Left ventricle myocardium inferior (tissue), 1 donor: ENCODE measurements at regions of chr5 and their contacts with region 1.

Region 1: DNA sequence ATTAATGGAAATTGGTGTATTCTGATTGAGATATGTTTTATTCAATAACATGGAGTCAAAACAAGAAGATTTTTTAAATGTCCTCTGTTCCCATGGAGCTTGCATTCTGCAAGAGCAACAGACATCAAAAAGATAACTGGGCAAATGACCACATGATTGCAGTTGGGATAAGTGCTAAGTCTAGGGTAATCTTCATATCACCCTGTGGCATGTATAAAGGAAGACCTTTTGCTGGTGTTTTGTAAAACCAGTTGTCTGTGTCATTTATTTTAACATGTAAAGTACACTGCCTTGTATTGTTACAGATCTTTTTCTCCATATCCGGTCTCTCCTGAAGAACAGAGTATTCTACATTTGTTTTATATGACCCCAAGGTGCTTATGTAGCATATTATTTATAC is 44.0 kb downstream of the PTCD2 start:
- DNase-seq: no peak
- H3K4me3 ChIP-seq: no peak overlapping the region
- H3K27ac ChIP-seq: no peak overlapping the region
- H3K4me1 ChIP-seq: peaks cover 12% of the 10 kb centered on the region
- H3K27me3 ChIP-seq: no peaks in the 10 kb centered on the region
- CTCF ChIP-seq: no peak

Region 2: DNA sequence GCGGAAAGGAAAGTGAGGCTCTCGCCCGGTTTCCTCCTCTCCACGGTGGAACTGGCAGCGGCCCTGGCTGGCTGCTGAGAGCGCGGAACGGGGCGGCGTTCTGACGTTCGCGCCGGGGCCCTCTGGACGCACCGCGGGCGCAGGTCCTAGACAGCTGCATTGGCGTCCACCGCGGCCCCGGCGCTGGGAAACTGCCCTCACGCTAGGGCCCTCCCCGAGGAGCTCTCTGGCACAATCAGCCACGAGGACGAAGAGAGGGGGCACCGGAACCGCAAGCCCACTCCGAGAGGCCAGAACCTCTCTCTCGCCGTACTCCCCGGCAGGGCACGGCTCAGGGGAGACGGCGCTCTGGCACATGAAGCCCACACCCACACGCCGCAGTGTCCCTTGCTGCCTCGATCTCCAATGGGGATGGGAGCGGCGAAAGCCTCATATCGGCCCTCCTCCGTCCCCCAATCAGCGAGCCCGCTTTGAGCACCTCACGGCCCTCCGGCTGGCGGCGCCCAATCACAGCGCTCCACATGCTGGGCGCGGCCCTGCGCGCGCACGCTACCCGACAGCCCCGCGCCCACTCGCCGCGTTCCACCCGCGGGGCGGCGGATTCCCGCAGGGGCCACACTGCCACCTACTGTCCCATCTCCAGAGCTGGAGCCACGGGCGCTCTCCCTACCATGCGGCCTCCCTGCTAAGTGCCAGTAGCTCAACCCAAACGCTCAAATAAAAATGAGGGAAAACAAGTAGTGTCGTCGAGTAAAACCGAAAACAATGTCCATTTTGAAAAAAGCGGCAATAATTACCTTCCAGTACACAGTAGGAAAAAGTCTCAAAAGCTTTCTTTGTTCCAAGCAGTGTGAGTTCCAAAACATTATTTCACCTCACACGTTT is 56.0 kb before region 1 on chr5:
- intact Hi-C with region 1: no loop called
- DNase-seq: peak; percentile 98
- H3K4me3 ChIP-seq: peak overlapping the region; percentile 82
- H3K27ac ChIP-seq: peak overlapping the region; percentile 97
- H3K4me1 ChIP-seq: peaks cover 33% of the 10 kb centered on the region
- H3K27me3 ChIP-seq: no peaks in the 10 kb centered on the region
- CTCF ChIP-seq: peak; percentile 95

Region 3: GRCh38 chr5:72451741-72452505 is 87.8 kb after region 1 on chr5:
- intact Hi-C with region 1: no loop called
- DNase-seq: peak; percentile 76
- H3K4me3 ChIP-seq: no peak overlapping the region
- H3K27ac ChIP-seq: peak overlapping the region; percentile 95
- H3K4me1 ChIP-seq: peaks cover 74% of the 10 kb centered on the region
- H3K27me3 ChIP-seq: no peaks in the 10 kb centered on the region
- CTCF ChIP-seq: no peak

Region 4: GRCh38 chr5:72523960-72524582 is 159.9 kb after region 1 on chr5:
- intact Hi-C with region 1: loop called (anchors 2 kb)
- DNase-seq: no peak
- H3K4me3 ChIP-seq: no peak overlapping the region
- H3K27ac ChIP-seq: peak overlapping the region; percentile 31
- H3K4me1 ChIP-seq: peaks cover 9% of the 10 kb centered on the region
- H3K27me3 ChIP-seq: no peaks in the 10 kb centered on the region
- CTCF ChIP-seq: peak; percentile 77